MCF 10A (cell line): ENCODE measurements at regions of chr21 and their contacts with region 1.

Region 1: GRCh38 chr21:36630485-36631206 is 68.3 kb upstream of the SIM2 start:
- DNase-seq: peak; percentile 71
- H3K4me3 Mint-ChIP-seq: no peak overlapping the region
- H3K27ac Mint-ChIP-seq: no peak overlapping the region
- H3K4me1 Mint-ChIP-seq: no peaks in the 10 kb centered on the region
- H3K27me3 Mint-ChIP-seq: no peaks in the 10 kb centered on the region
- CTCF ChIP-seq: peak; percentile 86

Region 2: GRCh38 chr21:36419996-36420395 is 210.7 kb before region 1 on chr21:
- CTCF ChIA-PET with region 1: no interaction called
- POLR2A ChIA-PET with region 1: no interaction called
- intact Hi-C with region 1: loop called (anchors 5 kb)
- DNase-seq: peak; percentile 83
- H3K4me3 Mint-ChIP-seq: no peak overlapping the region
- H3K27ac Mint-ChIP-seq: no peak overlapping the region
- H3K4me1 Mint-ChIP-seq: no peaks in the 10 kb centered on the region
- H3K27me3 Mint-ChIP-seq: no peaks in the 10 kb centered on the region
- CTCF ChIP-seq: peak; percentile 65

Region 3: GRCh38 chr21:36610201-36610600 is 20.4 kb before region 1 on chr21:
- CTCF ChIA-PET with region 1: interaction called, 15 read pairs
- POLR2A ChIA-PET with region 1: no interaction called
- intact Hi-C with region 1: no loop called
- DNase-seq: no peak
- H3K4me3 Mint-ChIP-seq: no peak overlapping the region
- H3K27ac Mint-ChIP-seq: no peak overlapping the region
- H3K4me1 Mint-ChIP-seq: peaks cover 6% of the 10 kb centered on the region
- H3K27me3 Mint-ChIP-seq: peaks cover 38% of the 10 kb centered on the region
- CTCF ChIP-seq: no peak

Region 4: GRCh38 chr21:36654324-36654723 is 23.7 kb after region 1 on chr21:
- CTCF ChIA-PET with region 1: interaction called, 15 read pairs
- POLR2A ChIA-PET with region 1: no interaction called
- intact Hi-C with region 1: no loop called
- DNase-seq: no peak
- H3K4me3 Mint-ChIP-seq: no peak overlapping the region
- H3K27ac Mint-ChIP-seq: no peak overlapping the region
- H3K4me1 Mint-ChIP-seq: no peaks in the 10 kb centered on the region
- H3K27me3 Mint-ChIP-seq: no peaks in the 10 kb centered on the region
- CTCF ChIP-seq: no peak

Region 5: GRCh38 chr21:36698981-36699891 is 68.6 kb after region 1 on chr21 and contains the start of gene SIM2:
- CTCF ChIA-PET with region 1: interaction called, 7 read pairs
- POLR2A ChIA-PET with region 1: interaction called, 5 read pairs
- intact Hi-C with region 1: loop called (anchors 2 kb)
- DNase-seq: peak; percentile 76
- H3K4me3 Mint-ChIP-seq: peak within 1 kb of the TSS; percentile 81
- H3K27ac Mint-ChIP-seq: peak within 1 kb of the TSS; percentile 83
- H3K4me1 Mint-ChIP-seq: peaks cover 13% of the 10 kb centered on the region
- H3K27me3 Mint-ChIP-seq: no peaks in the 10 kb centered on the region
- CTCF ChIP-seq: no peak
- total RNA-seq, gene SIM2: 11.2 and 14.4 TPM in 2 replicates

Region 6: GRCh38 chr21:36854391-36854790 is 223.7 kb after region 1 on chr21:
- CTCF ChIA-PET with region 1: interaction called, 14 read pairs
- POLR2A ChIA-PET with region 1: no interaction called
- intact Hi-C with region 1: no loop called
- DNase-seq: peak; percentile 53
- H3K4me3 Mint-ChIP-seq: no peak overlapping the region
- H3K27ac Mint-ChIP-seq: no peak overlapping the region
- H3K4me1 Mint-ChIP-seq: peaks cover 18% of the 10 kb centered on the region
- H3K27me3 Mint-ChIP-seq: no peaks in the 10 kb centered on the region
- CTCF ChIP-seq: peak; percentile 56

Region 7: DNA sequence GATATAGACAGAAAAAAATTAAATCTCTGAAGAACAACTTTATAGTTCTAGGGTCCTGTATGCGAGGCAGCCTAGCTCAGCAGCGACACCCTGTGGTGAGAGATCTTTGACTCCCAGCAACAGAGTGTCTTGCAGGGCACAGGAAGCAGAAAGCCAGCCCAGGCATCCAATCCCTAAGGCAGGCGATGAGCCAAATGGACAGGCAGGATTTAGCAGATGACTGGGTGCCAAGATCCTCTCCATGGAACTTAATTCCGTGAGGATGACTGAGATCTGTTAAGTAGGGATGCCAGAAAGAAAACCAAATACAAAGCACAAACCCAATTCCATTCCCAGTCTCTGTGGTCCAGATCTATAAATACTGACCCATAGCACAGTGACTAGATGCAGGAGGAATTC is 297.1 kb after region 1 on chr21:
- CTCF ChIA-PET with region 1: interaction called, 70 read pairs
- POLR2A ChIA-PET with region 1: no interaction called
- intact Hi-C with region 1: no loop called
- DNase-seq: peak; percentile 85
- H3K4me3 Mint-ChIP-seq: no peak overlapping the region
- H3K27ac Mint-ChIP-seq: no peak overlapping the region
- H3K4me1 Mint-ChIP-seq: peaks cover 8% of the 10 kb centered on the region
- H3K27me3 Mint-ChIP-seq: no peaks in the 10 kb centered on the region
- CTCF ChIP-seq: peak; percentile 79